Right ventricle myocardium inferior (tissue), 1 donor: ENCODE measurements at regions of chr12 and their contacts with region 1.

Region 1: GRCh38 chr12:40107098-40107802 is 1.4 kb upstream of the SLC2A13 start:
- DNase-seq: peak; percentile 96
- ATAC-seq: peak; percentile 57

Region 2: GRCh38 chr12:39764944-39765560 is 342.2 kb before region 1 on chr12:
- intact Hi-C with region 1: loop called (anchors 2 kb)
- DNase-seq: no peak
- ATAC-seq: peak; percentile 48

Region 3: DNA sequence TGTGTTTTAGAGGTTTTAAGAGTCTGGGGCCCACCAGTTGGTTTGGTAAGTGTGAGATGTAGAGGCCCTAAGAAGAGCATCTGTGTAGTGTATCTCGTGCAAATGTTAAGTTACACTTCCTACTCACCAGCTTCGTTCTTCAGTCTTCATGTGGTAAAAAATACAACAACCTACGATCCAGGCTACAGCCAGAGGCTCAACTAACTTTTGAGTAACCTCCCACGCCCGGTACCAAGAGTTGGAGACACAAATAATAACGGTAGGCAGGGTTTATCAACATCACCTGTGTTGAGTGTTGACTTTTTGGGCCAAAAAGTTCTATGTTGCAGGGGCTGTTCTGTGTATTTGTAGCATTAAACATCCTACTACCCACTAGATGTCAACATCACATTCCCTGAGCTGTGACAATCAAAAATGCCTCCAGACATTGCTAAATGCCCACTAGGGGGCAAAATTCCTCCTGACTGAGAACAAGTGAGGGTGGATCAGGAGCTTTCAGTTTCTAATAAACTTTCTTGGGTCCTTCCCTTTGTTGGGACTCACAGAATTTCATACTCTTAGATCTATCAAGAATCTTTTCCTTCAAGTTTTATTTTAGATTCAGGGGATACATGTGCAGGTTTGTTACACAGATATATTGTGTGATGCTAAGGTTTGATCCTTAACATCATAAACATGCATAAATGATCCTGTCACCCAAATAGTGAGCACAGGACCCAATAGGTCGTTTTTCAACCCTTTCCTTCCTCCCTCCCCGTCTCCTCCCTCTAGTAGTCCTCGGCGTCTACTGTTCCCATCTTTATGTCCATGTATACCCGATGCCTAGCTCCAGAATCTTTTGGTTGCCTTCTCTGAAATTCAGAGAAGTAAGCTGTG is 96.1 kb before region 1 on chr12:
- intact Hi-C with region 1: loop called (anchors 1 kb)
- DNase-seq: no peak
- ATAC-seq: peak; percentile 94

Region 4: DNA sequence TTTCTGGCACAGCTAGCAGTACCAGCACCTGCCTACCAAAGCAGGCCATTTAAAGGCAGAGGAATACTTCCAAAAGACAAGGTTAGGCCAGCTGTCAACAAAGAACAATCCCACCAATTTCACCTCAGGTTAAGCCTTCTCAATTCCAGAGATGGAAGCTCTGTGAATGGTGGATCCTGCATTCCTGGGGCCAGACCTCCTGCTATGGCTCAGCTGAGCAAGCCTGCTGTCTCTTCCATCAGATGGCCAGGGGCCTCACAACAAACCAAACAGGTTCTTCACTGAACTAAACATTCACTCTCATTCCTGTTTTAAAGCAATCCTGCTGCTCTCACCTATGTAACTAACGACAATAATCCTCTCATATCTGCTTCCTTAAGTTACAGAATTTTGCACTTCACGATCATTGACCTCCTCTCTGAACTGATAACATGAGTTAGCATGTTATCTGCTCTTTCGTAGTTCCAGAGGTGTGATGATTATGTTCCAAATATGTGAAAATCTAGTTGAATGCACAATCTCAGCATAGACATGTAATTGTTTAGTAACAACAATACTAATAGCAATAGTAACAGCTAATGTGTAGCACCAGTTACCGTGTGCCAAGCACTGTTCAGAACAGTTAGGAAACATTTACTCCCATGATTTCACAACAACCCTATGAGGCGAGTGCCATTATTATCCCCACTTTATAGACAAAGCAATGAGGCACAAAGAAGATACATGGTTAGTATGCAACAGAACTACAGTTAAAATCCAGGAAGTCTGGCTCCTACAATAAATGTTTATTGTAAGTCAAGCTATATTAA is 74.6 kb before region 1 on chr12:
- intact Hi-C with region 1: loop called (anchors 5 kb)
- DNase-seq: no peak
- ATAC-seq: peak; percentile 62

Region 5: DNA sequence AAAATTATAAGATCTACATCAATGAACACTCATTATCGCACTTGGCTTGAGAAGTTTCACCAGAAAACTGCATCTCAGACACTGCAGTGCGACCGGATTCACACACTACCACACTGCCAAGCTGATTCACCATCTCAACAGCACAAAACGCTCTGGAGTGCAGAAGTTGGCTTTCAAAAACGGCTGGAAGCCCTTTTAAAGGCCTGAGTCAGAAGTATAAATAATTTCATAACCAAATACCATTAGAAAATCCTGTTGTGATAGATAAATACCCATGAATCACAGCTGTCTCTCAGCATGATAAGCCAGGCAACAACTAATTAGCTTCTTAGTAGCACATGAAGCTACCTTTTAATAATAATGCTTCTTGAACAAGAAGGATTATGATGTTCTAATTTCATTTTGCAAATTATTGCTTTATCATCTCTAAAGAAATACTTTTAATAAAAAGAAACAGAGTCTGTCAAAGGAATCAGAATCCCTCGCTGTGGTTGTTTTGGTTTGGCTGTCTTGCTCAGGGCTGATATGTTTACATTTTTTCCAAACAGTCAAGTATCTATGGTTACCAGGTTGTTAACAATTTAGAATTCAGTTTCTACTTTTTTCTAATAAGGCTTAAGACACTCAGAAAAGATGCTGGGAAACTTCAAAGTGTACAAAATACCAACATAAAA is 52.6 kb before region 1 on chr12:
- intact Hi-C with region 1: loop called (anchors 5 kb)
- DNase-seq: no peak
- ATAC-seq: peak; percentile 91

Region 6: DNA sequence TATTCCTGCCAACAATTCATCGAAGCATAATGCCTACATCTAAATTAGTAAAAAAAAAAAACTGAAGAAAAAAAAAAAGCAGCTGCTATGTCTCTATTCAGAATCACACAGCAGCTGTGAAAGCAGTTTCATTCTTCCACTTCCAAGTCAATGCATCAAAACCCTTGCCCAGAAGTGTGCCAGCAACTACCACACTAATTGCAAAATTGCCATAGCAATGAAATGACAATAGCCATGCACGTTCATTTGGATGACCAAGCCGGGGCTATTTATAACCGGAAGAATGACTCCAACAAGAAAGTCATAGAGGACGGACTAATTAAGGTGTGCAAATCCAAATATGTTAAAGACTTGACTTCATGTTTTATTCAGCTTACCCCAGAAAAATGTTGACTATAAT is 43.8 kb before region 1 on chr12:
- intact Hi-C with region 1: loop called (anchors 5 kb)
- DNase-seq: no peak
- ATAC-seq: peak; percentile 75

Region 7: DNA sequence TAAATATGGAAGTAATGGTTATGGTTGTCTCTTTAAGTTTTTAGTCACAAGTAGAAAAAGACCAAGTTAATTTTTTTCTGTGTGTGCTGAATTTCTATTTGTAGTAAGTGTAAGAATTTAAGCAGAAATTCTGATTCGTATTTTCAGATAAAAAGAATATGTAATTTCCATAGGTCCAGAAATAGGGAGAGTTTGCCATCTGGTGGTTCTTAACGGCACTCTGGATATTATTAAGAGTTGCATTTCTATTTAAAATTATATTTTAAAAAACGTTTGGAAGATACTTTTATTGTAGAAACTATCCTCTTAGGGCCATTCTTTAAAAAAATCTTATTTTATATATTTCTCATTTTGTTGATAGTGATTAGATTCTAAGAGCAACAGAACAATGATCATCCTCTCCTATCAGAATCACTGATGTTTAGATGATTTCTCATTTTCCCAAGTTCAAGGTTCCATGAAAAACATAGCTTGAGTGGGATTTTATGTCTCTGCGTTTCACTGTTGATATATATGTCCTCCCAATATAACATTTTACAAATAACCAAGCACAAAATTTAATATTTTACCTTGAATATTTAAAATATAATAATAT is 205.8 kb after region 1 on chr12:
- intact Hi-C with region 1: no loop called
- DNase-seq: no peak
- ATAC-seq: no peak